PC-3 (cell line): ENCODE measurements at regions of chr14 and their contacts with region 1.

Region 1: DNA sequence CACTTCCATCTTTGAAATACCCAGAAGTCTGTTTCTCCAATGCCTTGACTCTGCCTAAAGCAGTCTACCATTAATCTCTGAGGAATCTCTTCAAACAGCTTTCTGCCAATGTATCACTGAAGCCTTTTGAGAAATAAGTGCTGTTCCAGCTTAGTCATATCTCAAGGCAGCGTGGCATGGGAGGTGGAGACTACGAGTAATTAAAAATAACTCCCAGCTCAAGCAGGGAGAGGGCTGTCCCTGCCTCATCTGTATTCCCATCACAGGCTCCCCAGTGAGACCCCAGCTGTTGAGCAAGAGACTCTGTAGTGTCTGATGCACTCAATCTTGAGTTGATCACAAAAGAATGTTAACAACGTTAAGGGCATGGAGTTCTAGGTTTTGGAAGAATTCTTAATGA is 700.6 kb downstream of the DIO2 start:
- DNase-seq: peak; percentile 15
- ATAC-seq: no peak
- H3K4me3 ChIP-seq: no peak overlapping the region
- H3K27ac ChIP-seq: no peak overlapping the region
- H3K4me1 ChIP-seq: peaks cover 22% of the 10 kb centered on the region
- H3K27me3 ChIP-seq: no peaks in the 10 kb centered on the region
- CTCF ChIP-seq: no peak

Region 2: GRCh38 chr14:79074510-79074909 is 436.1 kb before region 1 on chr14:
- CTCF ChIA-PET with region 1: no interaction called
- POLR2A ChIA-PET with region 1: no interaction called
- intact Hi-C with region 1: no loop called
- DNase-seq: peak; percentile 26
- ATAC-seq: no peak
- H3K4me3 ChIP-seq: no peak overlapping the region
- H3K27ac ChIP-seq: no peak overlapping the region
- H3K4me1 ChIP-seq: no peaks in the 10 kb centered on the region
- H3K27me3 ChIP-seq: no peaks in the 10 kb centered on the region
- CTCF ChIP-seq: no peak

Region 3: GRCh38 chr14:79419571-79420327 is 90.9 kb before region 1 on chr14:
- CTCF ChIA-PET with region 1: no interaction called
- POLR2A ChIA-PET with region 1: no interaction called
- intact Hi-C with region 1: loop called (anchors 10 kb)
- DNase-seq: no peak
- ATAC-seq: no peak
- H3K4me3 ChIP-seq: no peak overlapping the region
- H3K27ac ChIP-seq: no peak overlapping the region
- H3K4me1 ChIP-seq: peaks cover 6% of the 10 kb centered on the region; the same call in 1 of the 2 replicates
- H3K27me3 ChIP-seq: no peaks in the 10 kb centered on the region
- CTCF ChIP-seq: no peak

Region 4: DNA sequence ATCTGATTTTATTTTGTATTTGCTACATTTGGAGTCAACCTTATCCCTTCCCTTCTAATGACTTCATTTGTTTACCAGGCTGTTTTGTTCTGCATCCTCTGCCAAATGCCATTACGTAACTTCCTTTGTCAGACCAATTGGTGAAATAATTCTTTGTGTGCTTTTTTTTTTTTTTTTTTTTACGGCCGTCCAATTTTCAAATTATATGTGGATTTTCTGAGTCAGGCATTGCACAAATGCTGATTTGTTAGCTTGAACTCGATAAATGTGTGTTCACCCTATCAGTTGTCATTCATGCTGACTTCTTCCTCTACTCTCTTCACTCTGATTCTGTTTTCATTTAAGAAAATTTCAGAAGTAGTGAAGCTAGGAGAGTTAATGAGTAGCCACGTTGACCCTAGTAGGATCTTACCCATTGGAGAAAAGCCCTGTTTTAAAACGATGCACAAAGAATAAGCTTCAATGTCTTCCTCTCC is 314.4 kb after region 1 on chr14:
- CTCF ChIA-PET with region 1: interaction called, 18 read pairs
- POLR2A ChIA-PET with region 1: interaction called, 6 read pairs
- intact Hi-C with region 1: no loop called
- DNase-seq: peak; percentile 61
- ATAC-seq: peak; percentile 37; the same call in 1 of the 2 replicates
- H3K4me3 ChIP-seq: no peak overlapping the region
- H3K27ac ChIP-seq: no peak overlapping the region
- H3K4me1 ChIP-seq: no peaks in the 10 kb centered on the region
- H3K27me3 ChIP-seq: no peaks in the 10 kb centered on the region
- CTCF ChIP-seq: no peak